MCF 10A (cell line): ENCODE measurements at regions of chr3 and their contacts with region 1.

Region 1: DNA sequence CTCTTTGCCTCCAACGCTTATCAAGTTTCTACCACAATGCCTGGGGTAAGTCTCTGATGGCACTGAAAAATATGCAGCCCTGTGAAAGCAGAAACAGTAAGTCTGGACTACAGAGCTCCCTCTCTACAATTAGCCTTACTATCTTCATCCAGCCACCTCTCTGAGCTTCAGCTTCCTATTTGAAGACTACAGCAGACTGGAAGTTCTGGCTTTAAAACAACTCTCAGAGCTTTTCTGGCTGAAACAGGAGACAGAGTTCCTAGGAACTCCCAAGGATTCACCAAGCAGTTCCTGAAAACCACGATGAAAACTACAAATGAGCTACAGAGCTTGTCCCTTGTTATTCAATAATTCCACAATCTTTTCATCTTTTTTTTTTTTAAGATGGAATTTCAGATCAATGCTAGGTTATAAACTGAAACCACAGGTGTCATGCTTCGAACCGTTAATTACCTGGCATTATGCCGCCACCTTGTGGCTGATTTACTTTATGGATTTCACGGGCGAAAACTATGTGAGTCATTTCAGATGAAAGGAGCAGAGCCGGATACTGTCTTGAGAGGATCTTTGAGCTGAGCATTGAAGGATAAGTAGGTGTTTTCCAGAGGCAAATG is 3.9 kb downstream of the CRYGS start:
- DNase-seq: peak; percentile 89
- H3K4me3 Mint-ChIP-seq: no peak overlapping the region
- H3K27ac Mint-ChIP-seq: no peak overlapping the region
- H3K4me1 Mint-ChIP-seq: peaks cover 13% of the 10 kb centered on the region
- H3K27me3 Mint-ChIP-seq: no peaks in the 10 kb centered on the region
- CTCF ChIP-seq: peak; percentile 71

Region 2: DNA sequence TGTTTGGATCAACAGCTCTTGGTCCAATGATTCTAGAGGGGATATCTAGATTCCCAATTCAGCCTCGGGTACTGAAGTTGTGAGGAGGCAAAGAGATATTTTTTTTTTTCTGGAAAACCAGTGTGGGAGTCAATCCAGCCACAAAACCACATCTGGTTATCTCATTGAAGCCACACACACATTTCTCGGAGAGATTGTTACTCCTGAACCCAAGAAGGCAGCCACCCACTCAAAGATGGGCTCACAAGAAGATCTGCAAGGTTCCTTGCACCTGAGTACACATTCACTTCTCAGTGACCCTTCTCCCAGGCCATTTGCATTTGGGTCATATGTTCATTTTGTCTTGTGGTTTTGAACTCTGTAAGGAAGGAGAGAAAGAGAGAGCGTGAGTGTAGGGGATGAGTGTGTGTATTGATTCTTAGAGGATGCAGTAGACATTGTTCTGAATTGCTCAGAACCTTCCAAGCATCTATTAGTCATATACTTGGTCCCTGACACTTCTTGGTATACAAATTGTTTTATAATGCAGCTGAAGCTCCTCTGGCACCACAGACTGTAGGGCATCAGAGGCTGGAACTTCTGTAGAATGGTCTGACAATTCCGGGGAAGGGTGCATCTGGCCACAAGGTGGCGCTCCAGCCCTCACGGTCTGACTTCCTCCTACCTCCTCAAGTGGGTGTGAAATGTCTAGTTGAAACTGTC is 563.2 kb before region 1 on chr3:
- CTCF ChIA-PET with region 1: interaction called, 80 read pairs
- POLR2A ChIA-PET with region 1: no interaction called
- intact Hi-C with region 1: no loop called
- DNase-seq: peak; percentile 72
- H3K4me3 Mint-ChIP-seq: no peak overlapping the region
- H3K27ac Mint-ChIP-seq: no peak overlapping the region
- H3K4me1 Mint-ChIP-seq: no peaks in the 10 kb centered on the region
- H3K27me3 Mint-ChIP-seq: no peaks in the 10 kb centered on the region
- CTCF ChIP-seq: peak; percentile 87

Region 3: GRCh38 chr3:185995352-185995751 is 545.0 kb before region 1 on chr3:
- CTCF ChIA-PET with region 1: interaction called, 36 read pairs
- POLR2A ChIA-PET with region 1: no interaction called
- intact Hi-C with region 1: no loop called
- DNase-seq: peak; percentile 51
- H3K4me3 Mint-ChIP-seq: no peak overlapping the region
- H3K27ac Mint-ChIP-seq: no peak overlapping the region
- H3K4me1 Mint-ChIP-seq: peaks cover 8% of the 10 kb centered on the region
- H3K27me3 Mint-ChIP-seq: peaks cover 10% of the 10 kb centered on the region
- CTCF ChIP-seq: no peak

Region 4: DNA sequence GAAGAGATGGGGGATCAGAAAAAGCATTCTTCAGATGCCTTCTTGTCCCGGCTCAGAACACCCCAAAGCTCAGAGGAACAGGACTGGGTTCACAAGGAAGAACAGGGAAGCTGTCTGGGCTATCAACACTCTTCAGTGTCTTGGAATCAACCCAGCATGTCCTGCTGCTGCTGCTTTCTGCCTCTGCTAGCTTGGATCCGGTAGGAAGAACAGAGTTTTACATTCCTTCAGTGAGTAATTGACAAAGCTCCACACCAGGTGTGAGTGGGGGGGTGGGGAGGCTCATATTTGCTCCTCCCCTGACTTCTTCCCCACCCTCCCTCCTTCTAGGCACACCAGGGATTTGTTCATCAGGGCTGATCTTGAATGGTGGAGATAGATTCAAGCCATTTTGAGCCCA is 418.4 kb before region 1 on chr3:
- CTCF ChIA-PET with region 1: interaction called, 10 read pairs
- POLR2A ChIA-PET with region 1: no interaction called
- intact Hi-C with region 1: no loop called
- DNase-seq: peak; percentile 30
- H3K4me3 Mint-ChIP-seq: no peak overlapping the region
- H3K27ac Mint-ChIP-seq: peak overlapping the region; percentile 35
- H3K4me1 Mint-ChIP-seq: peaks cover 9% of the 10 kb centered on the region
- H3K27me3 Mint-ChIP-seq: peaks cover 30% of the 10 kb centered on the region
- CTCF ChIP-seq: no peak

Region 5: GRCh38 chr3:186277268-186277909 is 262.9 kb before region 1 on chr3:
- CTCF ChIA-PET with region 1: interaction called, 21 read pairs
- POLR2A ChIA-PET with region 1: no interaction called
- intact Hi-C with region 1: no loop called
- DNase-seq: peak; percentile 54
- H3K4me3 Mint-ChIP-seq: no peak overlapping the region
- H3K27ac Mint-ChIP-seq: no peak overlapping the region
- H3K4me1 Mint-ChIP-seq: no peaks in the 10 kb centered on the region
- H3K27me3 Mint-ChIP-seq: peaks cover 16% of the 10 kb centered on the region
- CTCF ChIP-seq: peak; percentile 26

Region 6: GRCh38 chr3:186551387-186551786 is 11.1 kb after region 1 on chr3:
- CTCF ChIA-PET with region 1: interaction called, 19 read pairs
- POLR2A ChIA-PET with region 1: no interaction called
- intact Hi-C with region 1: no loop called
- DNase-seq: no peak
- H3K4me3 Mint-ChIP-seq: no peak overlapping the region
- H3K27ac Mint-ChIP-seq: no peak overlapping the region
- H3K4me1 Mint-ChIP-seq: no peaks in the 10 kb centered on the region
- H3K27me3 Mint-ChIP-seq: no peaks in the 10 kb centered on the region
- CTCF ChIP-seq: no peak

Region 7: GRCh38 chr3:186679151-186679550 is 138.8 kb after region 1 on chr3:
- CTCF ChIA-PET with region 1: no interaction called
- POLR2A ChIA-PET with region 1: no interaction called
- intact Hi-C with region 1: no loop called
- DNase-seq: no peak
- H3K4me3 Mint-ChIP-seq: no peak overlapping the region
- H3K27ac Mint-ChIP-seq: no peak overlapping the region
- H3K4me1 Mint-ChIP-seq: no peaks in the 10 kb centered on the region
- H3K27me3 Mint-ChIP-seq: no peaks in the 10 kb centered on the region
- CTCF ChIP-seq: no peak